GM18951 (cell line): ENCODE measurements at regions of chr16 and their contacts with region 1.

Region 1: DNA sequence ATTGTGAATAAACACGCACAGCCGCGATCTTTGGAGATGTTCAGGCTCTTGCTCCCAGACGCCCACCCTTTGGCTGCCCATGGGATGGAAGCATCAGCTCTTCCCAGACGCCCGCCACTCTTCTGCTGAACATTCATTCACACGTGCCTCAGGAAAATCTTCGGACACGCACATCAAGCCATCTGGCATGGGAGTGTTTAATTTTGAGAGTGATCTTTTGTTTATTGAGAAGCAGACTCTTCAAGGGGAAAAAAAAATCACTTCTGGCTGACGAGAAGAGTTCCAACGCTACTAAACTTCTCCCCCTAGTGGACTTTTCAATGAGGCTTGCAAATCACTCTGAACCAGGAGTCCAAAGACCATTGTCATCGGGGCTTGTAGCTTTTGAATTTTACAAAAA is 62.0 kb upstream of the NUDT7 start:
- POLR2A ChIP-seq: no peak

Region 2: DNA sequence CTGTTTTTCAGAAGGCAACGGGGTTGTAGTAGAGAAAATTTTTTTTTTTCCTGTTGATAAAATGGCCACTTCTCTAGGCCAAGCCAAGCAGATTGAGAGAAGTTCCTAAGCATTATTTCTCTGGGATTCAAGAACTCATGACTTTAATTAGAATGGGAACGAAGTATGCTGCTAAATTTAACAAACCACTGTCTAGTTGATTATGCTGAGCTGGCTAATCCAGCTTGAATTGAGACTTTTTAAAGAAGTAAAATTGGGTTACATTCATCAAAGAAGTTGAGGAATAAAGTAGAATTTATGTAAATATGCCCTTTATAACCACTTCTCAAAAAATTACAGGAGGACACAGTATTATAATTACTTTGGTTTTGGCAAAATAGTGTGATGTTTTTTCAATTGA is 378.0 kb before region 1 on chr16:
- in situ Hi-C with region 1: no loop called
- POLR2A ChIP-seq: no peak

Region 3: DNA sequence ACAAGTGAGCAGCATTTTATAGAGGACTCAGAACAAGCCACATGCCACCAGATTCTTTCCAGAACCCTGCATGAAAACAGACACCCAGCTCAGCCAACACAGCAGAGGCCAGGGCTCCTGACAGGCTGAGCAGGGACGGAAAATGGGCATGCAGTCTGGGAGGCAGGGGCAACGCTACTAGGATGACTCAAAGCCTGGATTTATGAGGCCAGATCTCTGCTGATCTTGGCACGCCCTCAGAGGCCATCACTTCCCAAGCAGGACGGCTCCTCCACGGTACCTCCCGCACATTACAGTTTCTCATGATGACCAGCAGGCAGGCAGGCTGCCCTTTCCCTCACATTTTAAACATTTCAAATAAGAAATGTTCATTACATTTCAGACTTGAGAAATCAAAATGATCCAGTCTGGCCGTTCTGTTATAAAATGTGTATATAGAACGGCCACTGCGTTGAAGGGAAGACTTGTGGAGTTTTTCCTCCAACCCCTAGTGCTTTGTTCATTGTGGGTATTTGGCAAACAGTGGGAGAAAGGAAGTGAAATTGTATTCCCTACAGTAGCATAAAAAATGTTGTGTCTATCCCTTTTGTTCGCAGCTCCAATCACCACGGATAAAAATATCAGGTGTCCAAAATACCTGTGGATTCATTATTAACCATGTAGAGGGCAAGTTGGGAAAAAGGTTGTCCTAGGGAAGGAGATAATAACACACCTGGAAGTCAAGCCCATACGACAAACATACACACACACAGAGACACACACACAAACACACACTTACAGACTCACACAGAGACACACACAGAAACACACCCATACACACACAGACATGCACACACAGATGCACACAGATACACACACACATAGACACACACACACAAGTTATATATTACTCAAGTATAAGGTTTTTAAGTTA is 160.7 kb before region 1 on chr16:
- in situ Hi-C with region 1: no loop called
- POLR2A ChIP-seq: no peak

Region 4: GRCh38 chr16:77971306-77972271 is 311.3 kb after region 1 on chr16:
- in situ Hi-C with region 1: loop called (anchors 10 kb)
- POLR2A ChIP-seq: no peak

Region 5: GRCh38 chr16:77987810-77988209 is 327.5 kb after region 1 on chr16:
- in situ Hi-C with region 1: no loop called
- POLR2A ChIP-seq: no peak

Region 6: GRCh38 chr16:78034525-78034924 is 374.2 kb after region 1 on chr16:
- in situ Hi-C with region 1: no loop called
- POLR2A ChIP-seq: no peak